ENCODE measurements at regions of chr7 and their contacts with region 1.

Region 1: GRCh38 chr7:149147072-149147751 is at the start of gene ZNF398:
- DNase-seq: peak; percentile 91
- H3K4me3 ChIP-seq: peak within 1 kb of the TSS; percentile 77
- H3K27ac ChIP-seq: peak within 1 kb of the TSS; percentile 82
- H3K4me1 ChIP-seq: no peaks in the 10 kb centered on the region
- H3K27me3 ChIP-seq: no peaks in the 10 kb centered on the region
- CTCF ChIP-seq: peak; percentile 68
- total RNA-seq, gene ZNF398: 22.3 and 23.3 TPM in 2 replicates

Region 2: GRCh38 chr7:149125863-149126661 is 21.1 kb before region 1 on chr7 and contains the start of gene ZNF425:
- CTCF ChIA-PET with region 1: interaction called, 5 read pairs
- POLR2A ChIA-PET with region 1: no interaction called
- intact Hi-C with region 1: loop called (anchors 1 kb)
- DNase-seq: peak; percentile 95
- H3K4me3 ChIP-seq: peak within 1 kb of the TSS; percentile 95
- H3K27ac ChIP-seq: peak within 1 kb of the TSS; percentile 93
- H3K4me1 ChIP-seq: peaks cover 7% of the 10 kb centered on the region
- H3K27me3 ChIP-seq: no peaks in the 10 kb centered on the region
- CTCF ChIP-seq: peak; percentile 98
- total RNA-seq, gene ZNF425: 1.1 and 1.2 TPM in 2 replicates

Region 3: DNA sequence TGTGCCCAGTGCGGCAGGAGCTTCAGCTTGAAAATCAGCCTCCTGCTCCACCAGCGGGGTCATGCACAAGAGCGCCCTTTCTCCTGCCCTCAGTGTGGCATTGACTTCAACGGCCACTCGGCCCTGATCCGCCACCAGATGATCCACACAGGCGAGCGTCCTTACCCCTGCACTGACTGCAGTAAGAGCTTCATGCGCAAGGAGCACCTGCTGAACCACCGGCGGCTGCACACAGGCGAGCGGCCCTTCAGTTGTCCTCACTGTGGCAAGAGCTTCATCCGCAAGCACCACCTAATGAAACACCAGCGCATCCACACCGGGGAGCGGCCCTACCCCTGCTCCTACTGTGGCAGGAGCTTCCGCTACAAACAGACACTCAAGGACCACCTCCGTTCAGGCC is 32.0 kb after region 1 on chr7:
- CTCF ChIA-PET with region 1: interaction called, 21 read pairs
- POLR2A ChIA-PET with region 1: no interaction called
- intact Hi-C with region 1: no loop called
- DNase-seq: no peak
- H3K4me3 ChIP-seq: no peak overlapping the region
- H3K27ac ChIP-seq: no peak overlapping the region
- H3K4me1 ChIP-seq: no peaks in the 10 kb centered on the region
- H3K27me3 ChIP-seq: no peaks in the 10 kb centered on the region
- CTCF ChIP-seq: no peak

Region 4: GRCh38 chr7:149284850-149285626 is 137.8 kb after region 1 on chr7:
- CTCF ChIA-PET with region 1: no interaction called
- POLR2A ChIA-PET with region 1: no interaction called
- intact Hi-C with region 1: no loop called
- DNase-seq: peak; percentile 94
- H3K4me3 ChIP-seq: peak overlapping the region; percentile 57
- H3K27ac ChIP-seq: no peak overlapping the region
- H3K4me1 ChIP-seq: peaks cover 14% of the 10 kb centered on the region
- H3K27me3 ChIP-seq: no peaks in the 10 kb centered on the region
- CTCF ChIP-seq: no peak

Region 5: DNA sequence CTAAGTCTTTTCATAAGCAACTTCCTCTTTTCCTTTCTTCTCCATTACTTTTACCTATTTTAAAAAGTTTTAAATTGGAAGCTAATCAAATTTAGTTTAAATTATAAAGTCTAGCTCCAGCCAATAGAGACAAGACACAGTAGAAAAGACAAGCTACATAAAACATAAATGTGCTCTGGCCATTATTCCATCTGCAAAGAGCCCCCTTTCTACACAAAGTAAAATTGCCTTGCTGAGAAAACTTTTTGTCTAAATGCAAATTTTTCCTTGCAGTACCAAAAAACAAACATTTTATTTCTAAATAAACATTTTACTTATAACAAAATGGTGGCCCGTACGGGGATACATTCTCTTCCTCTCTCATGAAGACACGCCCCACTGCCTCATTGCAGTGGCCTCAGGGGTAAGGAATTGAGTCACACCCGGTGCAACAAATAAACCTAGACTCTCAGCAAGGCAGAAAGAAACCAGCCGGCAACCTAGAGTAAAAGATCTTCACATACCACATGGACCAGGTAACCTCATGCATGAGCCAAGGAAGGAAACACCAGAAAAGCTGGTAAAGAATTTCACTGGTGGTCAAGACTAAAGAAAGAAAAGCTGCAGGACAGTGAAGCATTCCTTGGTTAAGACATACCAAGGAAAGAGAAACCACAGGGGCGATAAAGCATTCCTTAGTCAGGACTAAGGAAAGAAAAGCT is 422.0 kb after region 1 on chr7:
- CTCF ChIA-PET with region 1: no interaction called
- POLR2A ChIA-PET with region 1: no interaction called
- intact Hi-C with region 1: no loop called
- DNase-seq: no peak
- H3K4me3 ChIP-seq: no peak overlapping the region
- H3K27ac ChIP-seq: no peak overlapping the region
- H3K4me1 ChIP-seq: no peaks in the 10 kb centered on the region
- H3K27me3 ChIP-seq: no peaks in the 10 kb centered on the region
- CTCF ChIP-seq: no peak

Measured in A673 (cell line).